Activated T-helper 2 cell treated with anti-CD3 and anti-CD28 coated beads, Interferon-gamma antibody, Interleukin-2, Interleukin-4, amounts not matched to agents 10 μg/mL and 5 μg/mL and 100 μg/mL, durations not matched to agents 14 hours and 24 hours and 36 hours (primary cell): ENCODE measurements at regions of chr7 and their contacts with region 1.

Region 1: GRCh38 chr7:1940402-1940786 is 270.3 kb downstream of the ELFN1 start:
- DNase-seq: peak; percentile 92
- H3K4me3 Mint-ChIP-seq: peak overlapping the region; percentile 84
- H3K27ac Mint-ChIP-seq: peak overlapping the region; percentile 91
- H3K4me1 Mint-ChIP-seq: peaks cover 55% of the 10 kb centered on the region
- H3K27me3 Mint-ChIP-seq: no peaks in the 10 kb centered on the region

Region 2: GRCh38 chr7:1925349-1925748 is 15.0 kb before region 1 on chr7:
- intact Hi-C with region 1: loop called (anchors 1 kb)
- DNase-seq: no peak
- H3K4me3 Mint-ChIP-seq: peak overlapping the region; percentile 56
- H3K27ac Mint-ChIP-seq: peak overlapping the region; percentile 38
- H3K4me1 Mint-ChIP-seq: peaks cover 65% of the 10 kb centered on the region
- H3K27me3 Mint-ChIP-seq: peaks cover 32% of the 10 kb centered on the region

Region 3: GRCh38 chr7:1961701-1962276 is 21.4 kb after region 1 on chr7:
- intact Hi-C with region 1: loop called (anchors 1 kb)
- DNase-seq: peak; percentile 43
- H3K4me3 Mint-ChIP-seq: no peak overlapping the region
- H3K27ac Mint-ChIP-seq: peak overlapping the region; percentile 59
- H3K4me1 Mint-ChIP-seq: peaks cover 2% of the 10 kb centered on the region
- H3K27me3 Mint-ChIP-seq: peaks cover 13% of the 10 kb centered on the region

Region 4: DNA sequence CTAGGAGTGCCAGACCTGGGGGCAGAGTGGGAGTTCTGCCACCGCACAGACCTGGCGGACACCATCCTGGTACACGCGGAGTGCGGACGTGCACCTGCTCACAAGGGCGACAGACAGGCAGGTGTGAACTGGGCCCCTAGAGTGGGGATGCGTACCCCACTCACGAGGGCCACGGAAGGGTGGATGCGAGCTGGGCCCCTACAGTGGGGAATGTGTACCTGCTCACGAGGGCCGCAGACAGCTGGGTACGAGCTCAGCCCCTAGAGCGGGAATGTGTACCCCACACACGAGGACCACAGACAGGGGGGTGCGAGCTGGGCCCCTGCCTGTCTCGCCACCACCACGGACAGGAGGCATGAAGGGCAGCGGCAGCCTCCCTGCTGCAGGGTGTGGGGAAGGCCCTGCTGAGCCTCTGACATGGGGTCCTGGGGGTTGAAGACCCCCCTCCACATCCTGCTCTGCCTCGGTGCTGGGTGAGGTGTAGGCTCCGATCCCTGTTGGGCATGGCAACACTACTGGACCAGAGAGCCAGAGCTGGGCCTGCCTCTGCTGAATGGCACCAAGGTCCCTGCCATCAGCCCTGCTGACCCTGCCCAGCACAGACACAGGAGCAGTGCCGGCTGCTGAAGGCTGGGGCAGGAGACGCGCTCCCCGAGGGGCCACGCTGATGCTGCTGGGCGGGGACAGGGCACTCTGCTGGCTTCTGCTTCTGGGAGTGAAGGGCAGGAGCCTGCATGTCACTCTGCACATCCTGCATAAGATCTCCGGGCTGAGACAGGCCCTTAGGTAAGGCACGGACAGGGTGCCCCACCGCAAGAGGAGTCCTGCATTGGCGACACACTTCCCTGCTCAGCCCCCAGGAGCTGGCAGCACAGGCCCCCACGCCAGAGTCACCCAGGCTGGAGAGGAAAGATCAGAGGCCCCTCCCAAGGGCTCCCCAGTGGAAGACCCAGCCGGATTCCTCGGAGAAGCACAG is 33.2 kb after region 1 on chr7:
- intact Hi-C with region 1: no loop called
- DNase-seq: no peak
- H3K4me3 Mint-ChIP-seq: no peak overlapping the region
- H3K27ac Mint-ChIP-seq: no peak overlapping the region
- H3K4me1 Mint-ChIP-seq: peaks cover 5% of the 10 kb centered on the region
- H3K27me3 Mint-ChIP-seq: no peaks in the 10 kb centered on the region